Spleen (tissue), 13 donors: ENCODE measurements at regions of chr2 and their contacts with region 1.

Region 1: DNA sequence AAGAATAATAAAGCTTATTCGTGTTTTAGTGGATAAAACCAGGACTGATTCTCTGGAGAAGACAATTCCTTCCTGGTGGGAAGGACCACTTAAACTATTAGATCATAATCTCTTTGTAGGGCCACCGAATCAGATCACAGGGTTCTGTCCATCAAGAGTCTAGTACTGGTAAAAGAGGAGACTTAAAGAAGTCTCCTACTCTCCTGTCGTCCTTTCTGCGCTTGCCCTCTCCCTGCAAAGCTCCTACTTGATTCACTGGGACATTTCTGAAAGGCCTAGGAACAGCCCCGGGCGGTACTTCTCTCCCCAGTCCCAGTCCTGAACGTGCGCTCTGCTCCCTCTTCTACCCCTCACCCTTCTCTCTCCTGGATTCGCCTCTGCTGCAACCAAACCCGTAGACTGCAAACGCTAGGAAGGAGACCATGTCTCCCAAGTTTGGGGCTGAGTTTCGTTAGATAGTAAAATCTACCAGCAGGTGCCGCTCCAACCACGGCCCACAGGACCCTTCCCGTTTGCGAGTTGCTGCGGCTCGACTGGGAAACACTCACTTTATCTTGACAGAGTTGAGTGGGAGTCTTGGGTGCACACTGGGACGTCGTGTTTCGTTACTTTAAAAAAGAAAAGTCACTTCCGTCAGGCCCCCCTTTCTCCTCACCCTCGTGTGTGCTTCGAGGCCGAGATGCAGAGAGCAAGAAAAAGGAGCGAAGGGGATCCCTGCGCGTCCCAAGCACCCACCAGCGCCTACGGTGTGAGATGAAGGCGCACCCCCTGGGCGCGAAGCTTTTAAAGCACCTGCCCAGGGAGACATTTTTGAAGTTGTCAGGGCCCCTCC is 923 bp downstream of the FIGLA start:
- DNase-seq: peak; percentile 86
- H3K4me3 ChIP-seq: peak overlapping the region in 7 of 8 donors; percentile 1 to 61 (median 20)
- H3K27ac ChIP-seq: no peak overlapping the region
- H3K4me1 ChIP-seq: peaks cover 3 to 17% (median 16%) of the 10 kb centered on the region in 6 donors
- H3K27me3 ChIP-seq: peaks cover 0 to 77% (median 30%) of the 10 kb centered on the region in 7 donors
- CTCF ChIP-seq: peak; percentile 28 to 66 (median 40)
- POLR2A ChIP-seq: no peak

Region 2: GRCh38 chr2:70887550-70888246 is 98.2 kb after region 1 on chr2:
- intact Hi-C with region 1: no loop called
- DNase-seq: no peak
- H3K4me3 ChIP-seq: peak overlapping the region; percentile 0 to 69 (median 37)
- H3K27ac ChIP-seq: no peak overlapping the region
- H3K4me1 ChIP-seq: peaks cover 10 to 33% (median 28%) of the 10 kb centered on the region in 6 donors
- H3K27me3 ChIP-seq: peaks cover 22 to 100% (median 94%) of the 10 kb centered on the region in 7 donors
- CTCF ChIP-seq: no peak
- POLR2A ChIP-seq: no peak

Region 3: DNA sequence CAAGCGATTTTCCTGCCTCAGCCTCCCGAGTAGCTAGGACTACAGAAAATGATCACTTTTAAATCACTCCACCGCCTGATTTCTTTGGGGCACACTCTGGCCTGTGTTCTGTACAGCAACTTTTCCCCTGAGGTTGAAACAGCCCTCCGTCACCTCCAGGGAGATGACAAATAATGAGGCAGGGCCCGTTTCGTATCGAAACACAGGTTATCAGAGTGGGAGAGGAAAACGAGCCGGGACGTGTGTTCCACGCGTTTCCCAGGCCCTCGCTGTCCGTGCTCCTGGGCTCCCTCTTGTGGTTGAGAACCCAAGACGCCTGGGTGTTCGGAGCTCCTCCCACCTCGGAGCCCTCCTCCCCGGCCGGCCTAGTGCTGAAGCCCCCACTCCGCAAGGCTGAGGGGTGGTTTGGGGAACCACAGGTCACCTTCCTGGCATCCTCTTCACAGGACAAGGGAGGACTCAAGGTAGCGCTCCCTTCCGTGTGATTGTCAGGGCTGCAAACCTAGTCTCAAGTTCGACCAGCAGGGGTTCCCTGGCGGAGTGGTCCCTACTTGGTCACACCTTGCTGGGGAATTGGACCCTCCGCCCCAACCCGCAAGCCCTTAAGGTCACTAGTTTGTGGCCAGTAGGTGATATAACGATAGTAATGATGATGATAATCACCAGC is 158.9 kb after region 1 on chr2:
- intact Hi-C with region 1: loop called (anchors 10 kb)
- DNase-seq: peak; percentile 90
- H3K4me3 ChIP-seq: peak overlapping the region in 5 of 8 donors; percentile 9 to 58 (median 24)
- H3K27ac ChIP-seq: no peak overlapping the region
- H3K4me1 ChIP-seq: peaks cover 0 to 24% (median 14%) of the 10 kb centered on the region in 6 donors
- H3K27me3 ChIP-seq: peaks cover 0 to 86% (median 17%) of the 10 kb centered on the region in 7 donors
- CTCF ChIP-seq: peak; percentile 25 to 90 (median 79)
- POLR2A ChIP-seq: no peak